CD4-positive, alpha-beta memory T cell (primary cell): ENCODE measurements at regions of chr3 and their contacts with region 1.

Region 1: GRCh38 chr3:45021148-45021923 is 4.8 kb upstream of the CLEC3B start:
- DNase-seq: no peak
- H3K4me3 ChIP-seq: no peak overlapping the region
- H3K4me3 Mint-ChIP-seq: peak overlapping the region in 3 of 8 donors; percentile 10 to 54 (median 28)
- H3K27ac ChIP-seq: no peak overlapping the region
- H3K27ac Mint-ChIP-seq: peak overlapping the region in 6 of 7 donors; percentile 50 to 89 (median 84)
- H3K4me1 ChIP-seq: peaks cover 16% of the 10 kb centered on the region
- H3K4me1 Mint-ChIP-seq: peaks cover 13 to 31% (median 21%) of the 10 kb centered on the region in 4 donors
- H3K27me3 ChIP-seq: no peaks in the 10 kb centered on the region
- H3K27me3 Mint-ChIP-seq: no peaks in the 10 kb centered on the region

Region 2: GRCh38 chr3:45002720-45003119 is 18.6 kb before region 1 on chr3:
- CTCF ChIA-PET with region 1: interaction called, 7 read pairs
- POLR2A ChIA-PET with region 1: interaction called, 15 read pairs
- intact Hi-C with region 1: no loop called
- DNase-seq: no peak
- H3K4me3 ChIP-seq: no peak overlapping the region
- H3K4me3 Mint-ChIP-seq: no peak overlapping the region
- H3K27ac ChIP-seq: no peak overlapping the region
- H3K27ac Mint-ChIP-seq: peak overlapping the region; percentile 23 to 82 (median 73)
- H3K4me1 ChIP-seq: peaks cover 21% of the 10 kb centered on the region
- H3K4me1 Mint-ChIP-seq: peaks cover 19 to 45% (median 28%) of the 10 kb centered on the region in 4 donors
- H3K27me3 ChIP-seq: no peaks in the 10 kb centered on the region
- H3K27me3 Mint-ChIP-seq: no peaks in the 10 kb centered on the region